HEK293T (cell line): ENCODE measurements at regions of chrX and their contacts with region 1.

Region 1: DNA sequence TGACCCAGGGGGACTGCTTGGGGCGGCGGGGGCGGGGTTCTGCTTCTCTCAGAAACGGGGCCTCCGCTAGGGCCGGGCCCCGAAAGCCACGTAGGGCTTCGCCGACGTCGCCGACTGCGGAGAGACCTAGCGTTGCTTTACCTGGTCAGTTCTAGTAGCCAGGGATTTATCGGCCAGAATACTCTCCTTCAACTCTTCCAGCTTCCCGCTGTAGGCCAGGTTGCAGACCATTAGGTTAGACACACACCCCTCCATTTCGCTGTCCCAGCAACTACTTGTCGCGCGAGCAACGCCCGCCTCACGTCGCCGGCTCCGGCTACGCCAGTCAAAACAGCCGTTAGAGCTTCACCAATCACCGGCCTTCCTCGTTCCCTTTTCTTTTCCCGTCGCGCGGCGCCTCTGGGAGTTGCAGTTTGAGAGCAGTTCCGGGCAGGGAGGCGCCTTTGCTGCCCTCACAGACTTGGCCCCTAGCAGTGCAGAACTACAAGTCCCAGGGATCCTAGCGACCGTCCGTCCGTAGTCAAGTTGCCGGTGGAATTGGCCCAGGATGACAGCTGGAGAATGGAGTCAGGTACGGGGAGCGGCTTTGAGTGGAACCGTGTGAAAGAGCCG is at the starts of genes ATG4A and PSMD10:
- DNase-seq: peak; percentile 89

Region 2: GRCh38 chrX:108081110-108081509 is 10.3 kb before region 1 on chrX:
- CTCF ChIA-PET with region 1: no interaction called
- POLR2A ChIA-PET with region 1: interaction called, 29 read pairs
- DNase-seq: no peak